Heart right ventricle (tissue), 16 donors: ENCODE measurements at regions of chr5 and their contacts with region 1.

Region 1: GRCh38 chr5:178535299-178536175 is 54.7 kb downstream of the COL23A1 start:
- DNase-seq: peak; percentile 69 to 78
- ATAC-seq: peak; percentile 80 to 97 (median 94)
- H3K4me3 ChIP-seq: no peak overlapping the region
- H3K27ac ChIP-seq: peak overlapping the region in 8 of 10 donors; percentile 21 to 80 (median 56)
- H3K4me1 ChIP-seq: peaks cover 0 to 35% (median 10%) of the 10 kb centered on the region in 9 donors
- H3K27me3 ChIP-seq: no peaks in the 10 kb centered on the region
- CTCF ChIP-seq: no peak

Region 2: GRCh38 chr5:178490935-178491652 is 44.4 kb before region 1 on chr5:
- intact Hi-C with region 1: loop called in 1 of 10 experiments (anchors 5 kb)
- DNase-seq: no peak
- ATAC-seq: no peak
- H3K4me3 ChIP-seq: no peak overlapping the region
- H3K27ac ChIP-seq: no peak overlapping the region
- H3K4me1 ChIP-seq: peaks cover 0 to 12% (median 0%) of the 10 kb centered on the region in 9 donors
- H3K27me3 ChIP-seq: no peaks in the 10 kb centered on the region
- CTCF ChIP-seq: no peak